T-cell (primary cell): ENCODE measurements at regions of chrX and their contacts with region 1.

Region 1: DNA sequence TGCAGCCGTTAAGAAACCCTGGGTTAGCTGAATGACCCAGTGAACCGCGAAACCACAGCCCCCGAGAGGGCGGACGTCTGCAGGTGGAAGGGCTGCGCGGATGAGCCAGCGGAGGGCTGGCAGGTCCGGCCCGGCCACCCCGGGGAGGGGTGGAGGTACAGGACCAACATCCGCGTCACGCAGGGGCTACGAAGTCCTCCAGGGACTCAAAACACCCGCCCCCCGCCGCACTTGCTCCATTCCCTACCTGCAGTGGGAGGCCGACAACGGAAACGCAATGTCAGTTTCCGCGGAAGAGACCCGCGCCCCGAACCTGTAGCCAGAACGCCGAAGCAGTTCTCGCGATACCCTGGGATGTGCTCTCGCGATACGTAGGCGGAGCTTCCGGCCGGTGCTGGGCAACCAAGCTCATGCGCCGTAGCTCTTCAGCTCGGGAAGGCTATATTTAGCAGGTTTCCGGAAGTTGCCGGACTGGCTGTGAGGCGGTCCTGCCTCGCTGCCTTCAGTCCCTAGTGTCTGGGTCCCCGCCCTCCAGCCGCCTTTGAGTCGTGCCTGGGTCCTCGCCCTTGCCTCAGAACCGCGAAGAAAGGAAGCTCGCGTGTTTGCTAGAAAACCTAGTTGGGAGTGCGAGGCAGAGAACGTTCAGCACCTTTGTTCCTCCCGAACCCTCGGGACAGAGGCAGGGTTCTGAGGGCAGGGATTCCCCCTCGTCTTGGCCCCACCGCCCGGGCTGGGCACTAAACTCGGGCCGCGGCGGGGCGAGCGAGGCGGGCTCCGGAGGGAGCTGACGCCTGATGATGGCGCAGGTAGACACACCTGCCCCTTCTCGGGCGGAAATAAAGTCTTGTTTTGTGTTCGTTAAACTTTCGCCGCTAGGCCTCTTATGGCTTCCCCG is at the starts of genes OFD1 and TRAPPC2:
- DNase-seq: peak; percentile 78 to 94 (median 86)
- ATAC-seq: peak; percentile 91 to 93 (median 93)
- H3K4me3 ChIP-seq: peak within 1 kb of the TSS; percentile 83 to 92
- H3K4me3 Mint-ChIP-seq: peak within 1 kb of the TSS; percentile 83 to 94 (median 89)
- H3K27ac ChIP-seq: peak within 1 kb of the TSS; percentile 98
- H3K27ac Mint-ChIP-seq: peak within 1 kb of the TSS; percentile 91 to 98
- H3K4me1 ChIP-seq: peaks cover 12 to 15% of the 10 kb centered on the region in 2 experiments
- H3K4me1 Mint-ChIP-seq: peaks cover 47 to 67% (median 66%) of the 10 kb centered on the region in 3 donors
- H3K27me3 ChIP-seq: no peaks in the 10 kb centered on the region
- H3K27me3 Mint-ChIP-seq: peaks cover 0 to 7% of the 10 kb centered on the region in 2 donors
- total RNA-seq, gene OFD1: 78.8 to 96.8 (median 89.3) TPM
- total RNA-seq, gene TRAPPC2: 24.8 to 32.9 (median 29.7) TPM

Region 2: DNA sequence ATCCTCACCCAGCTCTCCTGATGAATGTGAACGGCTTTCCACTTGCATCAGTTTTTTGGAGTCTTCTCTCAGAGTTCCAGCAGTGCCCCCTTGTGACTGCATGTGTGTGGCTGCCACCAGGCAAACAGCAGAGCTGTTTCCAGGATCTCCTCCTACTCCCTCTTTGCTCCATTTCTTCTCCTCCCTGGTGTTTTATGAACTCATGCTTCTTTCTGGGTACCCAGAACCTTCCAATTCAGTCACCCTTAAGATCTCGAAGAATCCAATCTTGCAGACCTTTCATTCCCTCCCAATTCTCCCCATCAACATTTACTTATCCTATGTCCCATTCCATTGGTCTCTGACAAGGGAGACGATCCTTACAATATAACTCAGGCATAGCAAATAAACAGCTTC is 88.4 kb before region 1 on chrX:
- CTCF ChIA-PET with region 1: no interaction called
- POLR2A ChIA-PET with region 1: no interaction called
- DNase-seq: peak in 16 of 35 experiments; percentile 3 to 48 (median 21)
- ATAC-seq: peak in 2 of 4 experiments; percentile 36 to 52
- H3K4me3 ChIP-seq: no peak overlapping the region
- H3K4me3 Mint-ChIP-seq: no peak overlapping the region
- H3K27ac ChIP-seq: no peak overlapping the region
- H3K27ac Mint-ChIP-seq: no peak overlapping the region
- H3K4me1 ChIP-seq: no peaks in the 10 kb centered on the region
- H3K4me1 Mint-ChIP-seq: peaks cover 0 to 15% (median 8%) of the 10 kb centered on the region in 3 donors
- H3K27me3 ChIP-seq: no peaks in the 10 kb centered on the region
- H3K27me3 Mint-ChIP-seq: peaks cover 0 to 23% of the 10 kb centered on the region in 2 donors

Region 3: DNA sequence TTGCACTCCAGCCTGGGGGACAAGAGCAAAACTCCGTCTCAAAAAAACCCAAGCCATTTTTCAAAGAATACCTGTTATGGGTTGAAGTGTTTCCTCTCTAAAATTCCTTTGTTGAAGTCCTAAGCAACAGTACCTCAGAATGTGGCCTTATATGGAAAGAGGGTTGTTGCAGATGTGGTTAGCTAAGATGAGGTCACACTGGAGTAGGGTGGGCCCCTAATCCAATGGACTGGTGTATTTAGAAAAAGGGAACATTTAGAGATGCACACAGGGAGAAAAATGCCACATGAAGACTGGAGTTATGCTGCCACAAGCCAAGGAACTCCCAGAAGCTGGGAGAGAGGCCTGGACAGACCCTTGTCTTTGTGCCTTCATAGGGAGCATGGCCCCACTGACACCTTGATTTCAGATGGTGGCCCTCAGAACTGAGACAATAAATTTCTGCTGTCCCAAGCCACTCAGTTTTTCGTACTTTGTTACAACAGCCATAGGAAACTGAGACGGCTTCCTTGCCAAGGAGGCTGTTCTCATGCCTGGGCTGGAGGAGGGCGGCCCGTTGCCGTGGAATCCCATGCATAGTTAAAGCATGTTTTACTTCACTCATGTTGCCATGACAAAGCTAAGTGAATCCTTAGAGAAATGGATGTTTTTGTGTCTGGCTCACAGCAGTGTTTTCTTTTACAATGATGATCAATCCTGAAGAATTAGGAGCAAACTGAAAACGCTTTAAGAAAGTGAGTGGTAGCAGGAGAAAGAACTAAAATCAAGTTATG is 16.6 kb before region 1 on chrX:
- CTCF ChIA-PET with region 1: interaction called, 3 to 4 read pairs
- POLR2A ChIA-PET with region 1: interaction called, 4 to 14 read pairs
- DNase-seq: no peak
- ATAC-seq: no peak
- H3K4me3 ChIP-seq: no peak overlapping the region
- H3K4me3 Mint-ChIP-seq: no peak overlapping the region
- H3K27ac ChIP-seq: peak overlapping the region; percentile 36
- H3K27ac Mint-ChIP-seq: peak overlapping the region; percentile 59 to 80
- H3K4me1 ChIP-seq: peaks cover 5 to 38% of the 10 kb centered on the region in 2 experiments
- H3K4me1 Mint-ChIP-seq: peaks cover 34 to 49% (median 47%) of the 10 kb centered on the region in 3 donors
- H3K27me3 ChIP-seq: no peaks in the 10 kb centered on the region
- H3K27me3 Mint-ChIP-seq: no peaks in the 10 kb centered on the region

Region 4: DNA sequence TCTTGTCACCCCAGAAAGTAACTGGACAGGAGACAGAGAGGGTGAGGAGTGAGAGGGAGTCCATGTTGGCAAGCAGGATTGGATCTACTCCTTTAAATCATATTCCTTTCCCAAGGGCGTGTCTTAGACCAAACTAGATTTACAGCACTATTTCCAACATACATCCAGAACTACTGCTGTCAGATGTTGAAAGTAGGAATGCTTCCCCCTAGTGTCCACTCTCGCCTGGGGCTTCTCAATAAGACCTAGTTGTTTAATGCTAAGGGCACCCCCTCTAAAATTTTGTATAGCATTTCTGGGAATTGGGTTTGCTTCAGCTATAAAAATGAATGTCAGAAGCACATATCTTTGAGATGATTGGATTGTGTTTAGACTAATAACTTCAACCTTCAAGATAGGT is 13.3 kb after region 1 on chrX:
- CTCF ChIA-PET with region 1: interaction called, 4 to 10 read pairs
- POLR2A ChIA-PET with region 1: interaction called, 6 to 11 read pairs
- DNase-seq: peak in 25 of 35 experiments; percentile 7 to 66 (median 22)
- ATAC-seq: peak in 3 of 4 experiments; percentile 37 to 57 (median 38)
- H3K4me3 ChIP-seq: no peak overlapping the region
- H3K4me3 Mint-ChIP-seq: no peak overlapping the region
- H3K27ac ChIP-seq: no peak overlapping the region
- H3K27ac Mint-ChIP-seq: peak overlapping the region in 1 of 2 donors; percentile 66
- H3K4me1 ChIP-seq: peaks cover 0 to 6% of the 10 kb centered on the region in 2 experiments
- H3K4me1 Mint-ChIP-seq: peaks cover 13 to 44% (median 22%) of the 10 kb centered on the region in 3 donors
- H3K27me3 ChIP-seq: no peaks in the 10 kb centered on the region
- H3K27me3 Mint-ChIP-seq: no peaks in the 10 kb centered on the region